ENCODE measurements at regions of chr6 and their contacts with region 1.

Region 1: DNA sequence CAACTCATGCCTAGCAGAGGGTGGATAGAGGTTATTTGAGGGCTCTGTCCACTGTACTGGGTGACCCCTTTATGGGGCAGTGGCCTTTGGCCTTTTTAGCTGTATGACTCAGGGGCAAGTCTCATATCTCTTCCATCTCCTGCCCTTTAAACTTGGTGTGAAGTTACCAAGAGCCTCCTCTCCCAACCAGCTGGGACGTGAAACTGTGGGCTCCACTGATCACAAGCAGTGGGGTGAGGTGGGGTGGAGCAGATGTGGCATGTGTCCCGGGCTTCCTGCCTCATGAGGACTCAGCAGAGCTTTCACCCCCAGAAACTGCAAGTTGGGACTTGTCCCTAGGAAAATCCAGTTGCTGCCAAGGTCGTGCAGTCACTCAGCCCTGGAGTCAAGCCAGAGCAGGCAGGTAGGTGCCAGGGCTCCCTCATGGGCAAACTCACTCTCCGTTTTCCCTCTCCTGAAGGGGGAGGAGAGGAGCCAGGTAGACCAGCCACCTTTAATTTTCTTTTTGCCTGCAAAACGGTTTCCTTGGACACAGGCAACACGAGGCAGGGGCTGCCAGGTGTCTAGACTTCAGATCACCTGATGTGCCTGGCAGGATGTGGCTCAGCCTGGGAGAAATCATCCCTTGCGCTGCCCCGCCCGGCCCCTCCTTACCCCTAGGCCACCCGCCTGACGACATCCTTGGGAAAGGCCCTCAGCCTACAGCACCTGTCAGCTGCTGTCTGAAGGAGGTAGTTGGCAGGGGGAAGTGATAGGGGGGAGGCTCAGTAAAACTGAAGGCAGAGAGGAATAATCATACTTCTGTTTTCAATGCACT is 4.0 kb downstream of the CDKN1A start:
- DNase-seq: peak; percentile 42
- ATAC-seq: no peak

Region 2: GRCh38 chr6:36423101-36423824 is 259.3 kb before region 1 on chr6:
- intact Hi-C with region 1: loop called in 1 of 2 experiments (anchors 10 kb)
- DNase-seq: peak; percentile 100
- ATAC-seq: peak; percentile 100

Region 3: DNA sequence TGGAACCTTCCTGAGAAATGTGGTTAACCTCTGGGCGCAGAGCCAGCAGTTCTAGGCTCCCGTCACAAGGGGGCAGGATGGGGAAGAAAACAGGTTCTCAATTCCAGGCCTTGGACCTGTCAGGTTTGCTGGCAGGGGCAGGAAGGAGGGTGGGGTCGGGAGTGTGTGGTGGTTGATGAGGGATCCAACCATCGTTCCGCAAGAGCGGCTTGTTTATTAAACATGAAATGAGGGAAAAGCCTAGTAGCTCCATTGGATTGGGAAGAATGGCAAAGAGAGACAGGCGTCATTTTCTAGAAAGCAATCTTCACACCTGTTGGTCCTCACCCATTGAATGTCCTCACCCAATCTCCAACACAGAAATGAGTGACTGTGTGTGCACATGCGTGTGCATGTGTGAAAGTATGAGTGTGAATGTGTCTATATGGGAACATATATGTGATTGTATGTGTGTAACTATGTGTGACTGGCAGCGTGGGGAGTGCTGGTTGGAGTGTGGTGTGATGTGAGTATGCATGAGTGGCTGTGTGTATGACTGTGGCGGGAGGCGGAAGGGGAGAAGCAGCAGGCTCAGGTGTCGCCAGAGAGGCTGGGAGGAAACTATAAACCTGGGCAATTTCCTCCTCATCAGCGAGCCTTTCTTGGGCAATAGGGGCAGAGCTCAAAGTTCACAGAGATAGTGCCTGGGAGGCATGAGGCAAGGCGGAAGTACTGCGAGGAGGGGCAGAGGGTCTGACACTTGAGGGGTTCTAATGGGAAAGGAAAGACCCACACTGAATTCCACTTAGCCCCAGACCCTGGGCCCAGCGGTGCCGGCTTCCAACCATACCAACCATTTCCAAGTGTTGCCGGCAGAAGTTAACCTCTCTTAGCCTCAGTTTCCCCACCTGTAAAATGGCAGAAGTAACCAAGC is 58.7 kb before region 1 on chr6:
- intact Hi-C with region 1: loop called (anchors 2 to 5 kb)
- DNase-seq: peak; percentile 87
- ATAC-seq: peak; percentile 58 to 68

Region 4: GRCh38 chr6:36724514-36725390 is 42.2 kb after region 1 on chr6:
- intact Hi-C with region 1: loop called in 1 of 2 experiments (anchors 5 kb)
- DNase-seq: peak; percentile 79
- ATAC-seq: peak; percentile 63 to 79

Region 5: DNA sequence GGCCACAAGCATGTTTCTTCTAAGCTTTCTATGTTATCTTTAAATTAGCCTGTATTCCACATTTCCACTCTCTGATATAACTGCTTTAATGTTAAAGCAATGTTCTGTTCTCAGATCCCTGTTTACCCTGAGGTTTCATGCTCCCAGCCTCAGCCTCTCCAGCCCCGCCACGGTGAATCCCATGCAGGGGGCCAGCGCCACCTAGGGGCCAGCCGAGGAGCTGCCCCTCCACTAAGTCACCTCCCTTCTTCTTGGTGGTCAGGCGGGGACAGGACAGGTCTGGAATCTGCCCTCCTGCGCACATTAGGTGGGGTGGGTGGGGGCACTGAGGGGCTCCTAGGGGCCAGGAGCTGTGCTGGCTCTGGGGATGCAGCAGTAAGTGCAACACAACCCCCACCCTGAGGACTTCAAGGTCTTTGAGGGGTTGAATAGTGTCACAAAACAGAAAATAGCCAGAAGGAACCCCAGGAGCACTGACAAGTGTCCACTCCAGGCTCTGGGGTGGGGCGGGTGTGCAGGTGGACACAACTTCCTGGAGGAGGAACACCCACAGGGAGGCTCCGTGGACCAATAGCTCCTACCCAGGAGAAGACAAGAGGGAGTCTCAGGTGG is 76.7 kb after region 1 on chr6:
- intact Hi-C with region 1: loop called in 1 of 2 experiments (anchors 10 kb)
- DNase-seq: peak; percentile 80
- ATAC-seq: peak; percentile 80 to 88

Region 6: GRCh38 chr6:36865835-36866234 is 183.3 kb after region 1 on chr6:
- intact Hi-C with region 1: no loop called
- DNase-seq: no peak
- ATAC-seq: peak in 1 of 2 donors; percentile 5

Region 7: GRCh38 chr6:36962874-36963273 is 280.3 kb after region 1 on chr6:
- intact Hi-C with region 1: no loop called
- DNase-seq: peak; percentile 65
- ATAC-seq: peak; percentile 20 to 35

Measured in left cardiac atrium (tissue), 4 donors.